PC-9 (cell line): ENCODE measurements at regions of chr19 and their contacts with region 1.

Region 1: GRCh38 chr19:32387701-32388392 is 17.7 kb upstream of the DPY19L3 start:
- DNase-seq: no peak
- H3K4me3 ChIP-seq: no peak overlapping the region
- H3K27ac ChIP-seq: no peak overlapping the region
- H3K4me1 ChIP-seq: no peaks in the 10 kb centered on the region
- H3K27me3 ChIP-seq: no peaks in the 10 kb centered on the region
- CTCF ChIP-seq: no peak

Region 2: GRCh38 chr19:32357720-32358119 is 30.1 kb before region 1 on chr19:
- CTCF ChIA-PET with region 1: interaction called, 18 read pairs
- POLR2A ChIA-PET with region 1: no interaction called
- intact Hi-C with region 1: no loop called
- DNase-seq: no peak
- H3K4me3 ChIP-seq: no peak overlapping the region
- H3K27ac ChIP-seq: no peak overlapping the region
- H3K4me1 ChIP-seq: peaks cover 12% of the 10 kb centered on the region
- H3K27me3 ChIP-seq: no peaks in the 10 kb centered on the region
- CTCF ChIP-seq: peak; percentile 45; the same call in 1 of the 2 replicates